Mammary epithelial cell (primary cell): ENCODE measurements at regions of chr2 and their contacts with region 1.

Region 1: DNA sequence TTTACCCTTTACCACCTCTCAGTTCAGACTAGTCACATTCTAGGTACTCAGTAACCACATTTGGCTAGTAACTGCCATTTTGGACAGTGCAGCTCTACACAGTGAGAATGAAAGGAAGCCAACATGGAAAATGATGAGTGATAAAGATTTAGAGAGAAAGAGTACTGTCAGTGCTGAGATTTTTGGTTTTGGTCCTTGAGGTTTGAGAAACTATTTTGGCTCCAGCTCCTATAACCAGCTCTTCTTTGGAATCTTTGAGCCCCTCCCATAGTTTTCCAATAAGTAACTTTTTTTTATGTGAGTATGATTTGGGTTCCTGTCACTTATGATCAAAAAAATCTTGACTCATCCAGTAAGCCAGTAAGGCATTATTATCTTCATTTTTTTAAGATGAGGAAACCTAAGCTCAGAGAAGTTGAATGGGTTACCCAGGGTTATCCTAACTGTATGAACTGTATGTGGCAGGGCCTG is 173.0 kb downstream of the BABAM2 start:
- DNase-seq: no peak
- H3K4me3 ChIP-seq: no peak overlapping the region
- H3K27ac ChIP-seq: no peak overlapping the region
- H3K4me1 ChIP-seq: no peaks in the 10 kb centered on the region
- H3K27me3 ChIP-seq: no peaks in the 10 kb centered on the region
- CTCF ChIP-seq: no peak

Region 2: DNA sequence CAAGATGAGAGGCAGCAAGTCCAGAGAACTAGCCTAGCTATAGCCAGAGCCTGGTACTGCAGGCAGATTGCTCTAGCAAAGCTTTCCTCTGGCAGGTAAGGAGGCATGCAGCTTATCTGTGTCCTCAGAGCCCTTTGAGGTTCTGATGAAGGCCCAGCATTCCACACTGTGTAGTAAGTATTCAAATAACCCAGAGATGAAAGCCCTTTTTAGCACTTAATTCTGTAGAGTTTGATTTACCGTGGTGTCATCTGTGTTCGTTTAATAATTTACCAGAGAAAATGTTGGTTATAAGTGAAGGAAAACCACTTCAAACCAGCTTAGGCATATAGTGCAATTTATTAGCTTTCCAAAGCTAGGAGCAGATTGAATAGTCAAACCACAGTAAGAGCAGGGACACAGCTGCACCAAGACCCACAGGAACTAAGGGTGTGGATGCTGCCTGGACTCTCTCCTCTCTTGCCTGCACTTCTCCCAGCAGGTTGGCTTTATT is 53.6 kb after region 1 on chr2:
- CTCF ChIA-PET with region 1: no interaction called
- dilution Hi-C with region 1: loop called (anchors 5 kb)
- in situ Hi-C with region 1: no loop called
- intact Hi-C with region 1: no loop called
- DNase-seq: no peak
- H3K4me3 ChIP-seq: no peak overlapping the region
- H3K27ac ChIP-seq: no peak overlapping the region
- H3K4me1 ChIP-seq: no peaks in the 10 kb centered on the region
- H3K27me3 ChIP-seq: no peaks in the 10 kb centered on the region
- CTCF ChIP-seq: no peak